ENCODE measurements at regions of chr2 and their contacts with region 1.

Region 1: DNA sequence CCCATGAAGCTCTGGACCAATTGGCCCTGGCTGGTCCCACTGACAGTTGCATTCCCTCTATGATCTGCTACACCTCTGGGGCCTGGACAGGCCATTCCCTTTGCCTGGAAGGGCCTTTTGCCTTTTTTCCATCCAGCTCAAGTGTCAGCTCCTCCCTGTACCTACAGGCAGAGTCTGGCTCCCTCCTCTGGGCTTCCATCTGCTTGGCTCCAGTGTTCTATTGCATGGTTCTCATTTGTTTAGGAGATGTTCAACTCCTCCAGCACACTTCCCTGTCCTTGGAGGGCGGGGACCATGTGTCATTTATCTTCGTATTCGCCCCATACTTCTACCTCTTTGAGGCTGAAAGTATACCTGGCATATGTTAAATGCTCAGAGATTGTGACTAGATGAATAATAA is 61.1 kb downstream of the PRKCE start:
- DNase-seq: no peak
- ATAC-seq: peak; percentile 35 to 47 (median 42)
- H3K4me3 ChIP-seq: no peak overlapping the region
- H3K27ac ChIP-seq: no peak overlapping the region
- H3K4me1 ChIP-seq: peaks cover 29% of the 10 kb centered on the region
- H3K27me3 ChIP-seq: no peaks in the 10 kb centered on the region
- CTCF ChIP-seq: peak; percentile 35

Region 2: GRCh38 chr2:45748239-45748638 is 35.7 kb after region 1 on chr2:
- intact Hi-C with region 1: loop called in 1 of 2 experiments (anchors 5 kb)
- DNase-seq: peak in 1 of 2 donors; percentile 58
- ATAC-seq: peak; percentile 56 to 58 (median 56)
- H3K4me3 ChIP-seq: no peak overlapping the region
- H3K27ac ChIP-seq: no peak overlapping the region
- H3K4me1 ChIP-seq: peaks cover 13% of the 10 kb centered on the region
- H3K27me3 ChIP-seq: no peaks in the 10 kb centered on the region
- CTCF ChIP-seq: no peak

Region 3: GRCh38 chr2:46187112-46187618 is 474.6 kb after region 1 on chr2:
- intact Hi-C with region 1: no loop called
- DNase-seq: no peak
- ATAC-seq: peak in 3 of 4 donors; percentile 23 to 47 (median 45)
- H3K4me3 ChIP-seq: peak overlapping the region; percentile 39
- H3K27ac ChIP-seq: peak overlapping the region; percentile 62
- H3K4me1 ChIP-seq: peaks cover 4% of the 10 kb centered on the region
- H3K27me3 ChIP-seq: no peaks in the 10 kb centered on the region
- CTCF ChIP-seq: no peak